ENCODE measurements at regions of chr16 and their contacts with region 1.

Region 1: GRCh38 chr16:56964243-56965148 is 2.7 kb downstream of the CETP start:
- DNase-seq: no peak
- ATAC-seq: peak; percentile 92
- H3K4me3 ChIP-seq: no peak overlapping the region
- H3K27ac ChIP-seq: no peak overlapping the region
- H3K4me1 ChIP-seq: peaks cover 7% of the 10 kb centered on the region
- H3K27me3 ChIP-seq: no peaks in the 10 kb centered on the region
- CTCF ChIP-seq: peak; percentile 100; a peak in 5 of 6 replicates
- EP300 ChIP-seq: no peak
- POLR2A ChIP-seq: no peak
- RAD21 ChIP-seq: peak; percentile 97

Region 2: GRCh38 chr16:56789360-56789759 is 175.1 kb before region 1 on chr16:
- CTCF ChIA-PET with region 1: interaction called, 13 read pairs
- POLR2A ChIA-PET with region 1: no interaction called
- RAD21 ChIA-PET with region 1: interaction called, 5 read pairs
- SMC1A ChIA-PET with region 1: interaction called, 4 read pairs
- in situ Hi-C with region 1: no loop called
- intact Hi-C with region 1: no loop called
- DNase-seq: no peak
- ATAC-seq: peak; percentile 69
- H3K4me3 ChIP-seq: no peak overlapping the region
- H3K27ac ChIP-seq: no peak overlapping the region
- H3K4me1 ChIP-seq: no peaks in the 10 kb centered on the region
- H3K27me3 ChIP-seq: no peaks in the 10 kb centered on the region
- CTCF ChIP-seq: peak; percentile 28 to 51 (median 31); a peak in 3 of 6 replicates
- EP300 ChIP-seq: no peak
- POLR2A ChIP-seq: no peak
- RAD21 ChIP-seq: peak; percentile 53

Region 3: DNA sequence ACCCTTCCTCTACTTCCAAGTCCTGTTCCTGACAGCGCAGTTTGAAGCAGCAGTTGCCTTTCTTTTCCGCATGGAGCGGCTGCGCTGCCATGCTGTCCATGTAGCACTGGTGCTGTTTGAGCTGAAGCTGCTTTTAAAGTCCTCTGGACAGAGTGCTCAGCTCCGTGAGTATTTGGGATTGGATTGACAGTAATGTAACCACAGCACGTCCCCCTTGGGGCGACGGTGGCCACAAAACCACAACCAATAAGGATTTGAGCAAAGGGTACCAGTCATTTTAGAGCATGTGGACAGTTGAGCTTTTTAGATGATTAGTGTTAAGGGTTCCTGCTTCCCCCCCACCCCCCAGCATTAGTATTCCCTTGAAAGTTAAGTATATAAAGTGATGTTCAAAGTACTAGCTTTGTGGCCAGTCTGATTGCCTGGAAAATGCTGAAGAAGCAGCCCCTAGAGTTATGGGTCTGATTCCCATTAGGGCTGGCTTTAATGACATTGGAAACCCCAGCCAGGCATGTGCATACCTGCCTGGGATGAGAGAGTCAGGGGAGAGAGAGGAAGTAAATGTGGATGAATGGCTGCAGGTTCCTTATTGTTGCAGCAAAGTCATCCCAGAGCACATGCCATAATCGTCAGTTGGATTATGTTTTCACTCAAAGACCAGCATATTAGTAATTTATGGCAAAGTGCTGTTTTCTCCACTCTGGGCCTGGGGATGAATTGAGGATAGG is 131.1 kb before region 1 on chr16:
- CTCF ChIA-PET with region 1: no interaction called
- POLR2A ChIA-PET with region 1: no interaction called
- RAD21 ChIA-PET with region 1: no interaction called
- SMC1A ChIA-PET with region 1: no interaction called
- in situ Hi-C with region 1: no loop called
- intact Hi-C with region 1: no loop called
- DNase-seq: no peak
- ATAC-seq: no peak
- H3K4me3 ChIP-seq: no peak overlapping the region
- H3K27ac ChIP-seq: no peak overlapping the region
- H3K4me1 ChIP-seq: no peaks in the 10 kb centered on the region
- H3K27me3 ChIP-seq: no peaks in the 10 kb centered on the region
- CTCF ChIP-seq: no peak
- EP300 ChIP-seq: no peak
- POLR2A ChIP-seq: no peak
- RAD21 ChIP-seq: no peak

Region 4: GRCh38 chr16:56944954-56945839 is 19.3 kb before region 1 on chr16:
- CTCF ChIA-PET with region 1: interaction called, 68 read pairs
- POLR2A ChIA-PET with region 1: interaction called, 4 read pairs
- RAD21 ChIA-PET with region 1: interaction called, 4 read pairs
- SMC1A ChIA-PET with region 1: interaction called, 6 read pairs
- in situ Hi-C with region 1: no loop called
- intact Hi-C with region 1: no loop called
- DNase-seq: peak; percentile 61
- ATAC-seq: peak; percentile 34
- H3K4me3 ChIP-seq: no peak overlapping the region
- H3K27ac ChIP-seq: peak overlapping the region; percentile 40; the same call in 1 of the 2 replicates
- H3K4me1 ChIP-seq: peaks cover 47% of the 10 kb centered on the region
- H3K27me3 ChIP-seq: no peaks in the 10 kb centered on the region
- CTCF ChIP-seq: no peak
- EP300 ChIP-seq: peak in 1 of 2 experiments; percentile 55; a peak in 1 of 4 replicates
- POLR2A ChIP-seq: peak; percentile 76
- RAD21 ChIP-seq: no peak

Region 5: DNA sequence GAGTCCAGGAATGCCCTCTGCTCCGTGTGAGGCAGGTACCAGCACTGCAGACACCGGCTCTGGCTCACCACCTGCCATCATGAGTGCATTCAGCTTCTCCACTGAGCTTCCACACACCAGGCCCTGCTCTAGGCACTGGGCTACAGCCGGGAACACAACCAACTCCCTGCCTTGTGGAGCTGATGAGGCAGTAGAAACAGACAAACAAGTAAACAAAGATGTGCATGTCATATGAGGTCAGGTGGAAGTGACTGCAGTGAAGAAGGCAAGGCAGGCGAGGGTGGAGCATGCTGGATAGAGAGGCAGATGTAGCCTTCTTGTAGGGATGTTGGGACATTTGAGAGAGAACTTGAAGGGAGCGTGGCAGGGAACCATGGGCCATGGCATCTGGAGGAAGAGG is 29.8 kb after region 1 on chr16:
- CTCF ChIA-PET with region 1: interaction called, 420 read pairs
- POLR2A ChIA-PET with region 1: interaction called, 343 read pairs
- RAD21 ChIA-PET with region 1: interaction called, 473 read pairs
- SMC1A ChIA-PET with region 1: interaction called, 604 read pairs
- in situ Hi-C with region 1: no loop called
- intact Hi-C with region 1: loop called (anchors 5 kb)
- DNase-seq: no peak
- ATAC-seq: 0 out of 3 replicates have a peak, but pooled peaks have one; percentile 1
- H3K4me3 ChIP-seq: no peak overlapping the region; the same call in 1 of the 2 replicates
- H3K27ac ChIP-seq: peak overlapping the region; percentile 15
- H3K4me1 ChIP-seq: peaks cover 14% of the 10 kb centered on the region
- H3K27me3 ChIP-seq: no peaks in the 10 kb centered on the region
- CTCF ChIP-seq: no peak
- EP300 ChIP-seq: no peak
- POLR2A ChIP-seq: no peak
- RAD21 ChIP-seq: no peak

Region 6: DNA sequence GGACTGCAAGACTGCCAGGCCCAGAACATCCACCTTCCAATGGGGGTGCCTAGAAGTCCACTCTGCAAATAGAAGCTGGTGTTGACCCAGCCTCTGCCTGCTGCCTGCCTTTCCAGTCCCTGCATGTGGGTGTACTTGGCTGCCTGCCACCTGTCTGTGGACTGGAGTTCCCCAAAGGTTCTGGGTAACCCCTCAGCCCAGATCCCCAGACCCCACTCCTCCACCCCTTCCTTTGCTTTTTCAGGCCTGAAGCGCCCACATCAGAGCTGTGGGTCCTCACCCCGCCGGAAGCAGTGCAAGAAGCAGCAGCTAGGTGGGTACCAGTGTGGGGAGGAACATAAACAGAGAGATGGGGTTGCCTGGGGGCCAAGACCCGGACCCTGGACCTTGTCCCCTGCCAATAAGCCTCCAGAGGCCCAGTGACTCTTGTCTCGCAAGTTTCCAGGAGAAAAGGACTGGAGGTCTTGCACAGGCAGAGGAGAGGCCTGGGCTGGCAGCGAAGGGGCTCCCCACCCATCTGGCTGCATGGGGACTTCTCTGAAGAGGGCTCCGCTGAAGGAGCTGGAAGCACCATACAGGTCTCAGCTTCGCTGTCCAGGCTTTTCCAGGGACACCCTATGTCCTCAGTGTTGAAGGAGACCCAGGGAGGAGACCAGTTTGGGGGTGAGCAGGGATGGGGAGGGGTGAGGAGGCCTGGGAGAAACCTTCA is 59.2 kb after region 1 on chr16:
- CTCF ChIA-PET with region 1: interaction called, 10 read pairs
- POLR2A ChIA-PET with region 1: no interaction called
- RAD21 ChIA-PET with region 1: interaction called, 6 read pairs
- SMC1A ChIA-PET with region 1: interaction called, 9 read pairs
- in situ Hi-C with region 1: no loop called
- intact Hi-C with region 1: no loop called
- DNase-seq: no peak
- ATAC-seq: peak; percentile 58
- H3K4me3 ChIP-seq: no peak overlapping the region
- H3K27ac ChIP-seq: no peak overlapping the region
- H3K4me1 ChIP-seq: no peaks in the 10 kb centered on the region; the same call in 1 of the 2 replicates
- H3K27me3 ChIP-seq: no peaks in the 10 kb centered on the region
- CTCF ChIP-seq: no peak
- EP300 ChIP-seq: no peak
- POLR2A ChIP-seq: no peak
- RAD21 ChIP-seq: no peak

Region 7: DNA sequence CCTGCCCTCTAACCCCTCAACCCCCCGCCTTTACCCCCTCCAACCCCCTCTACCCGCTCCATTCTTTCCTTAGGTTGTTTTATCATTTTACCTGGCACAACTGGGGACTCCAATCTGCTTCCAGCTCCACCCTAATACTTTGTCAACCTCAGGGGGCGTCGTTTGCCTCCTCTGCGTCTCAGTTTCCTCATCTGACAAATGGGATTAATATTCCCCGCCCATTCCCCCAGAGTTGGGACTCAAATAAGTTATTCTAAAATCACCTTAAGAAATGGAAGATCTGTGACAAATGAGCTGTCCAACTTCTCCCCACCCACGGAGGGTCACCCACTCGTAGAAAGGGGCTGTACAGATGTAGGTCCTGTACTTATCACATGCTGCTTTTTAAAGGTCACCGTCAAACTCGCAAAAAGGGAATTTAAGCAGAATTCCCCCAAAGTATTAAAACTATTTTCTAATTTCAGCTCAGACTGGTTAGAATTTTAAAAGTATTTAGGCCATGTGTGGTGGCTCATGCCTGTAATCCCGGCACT is 87.3 kb after region 1 on chr16:
- CTCF ChIA-PET with region 1: interaction called, 212 read pairs
- POLR2A ChIA-PET with region 1: interaction called, 21 read pairs
- RAD21 ChIA-PET with region 1: interaction called, 115 read pairs
- SMC1A ChIA-PET with region 1: interaction called, 111 read pairs
- in situ Hi-C with region 1: no loop called
- intact Hi-C with region 1: no loop called
- DNase-seq: no peak
- ATAC-seq: no peak
- H3K4me3 ChIP-seq: no peak overlapping the region
- H3K27ac ChIP-seq: no peak overlapping the region
- H3K4me1 ChIP-seq: peaks cover 36% of the 10 kb centered on the region
- H3K27me3 ChIP-seq: no peaks in the 10 kb centered on the region
- CTCF ChIP-seq: no peak
- EP300 ChIP-seq: no peak
- POLR2A ChIP-seq: no peak
- RAD21 ChIP-seq: no peak

Region 8: GRCh38 chr16:57091975-57092785 is 127.7 kb after region 1 on chr16 and contains the start of gene CPNE2:
- CTCF ChIA-PET with region 1: interaction called, 40 read pairs
- POLR2A ChIA-PET with region 1: interaction called, 3 read pairs
- RAD21 ChIA-PET with region 1: interaction called, 3 read pairs
- SMC1A ChIA-PET with region 1: interaction called, 3 read pairs
- in situ Hi-C with region 1: no loop called
- intact Hi-C with region 1: no loop called
- DNase-seq: no peak
- ATAC-seq: peak; percentile 68
- H3K4me3 ChIP-seq: peak within 1 kb of the TSS; percentile 66
- H3K27ac ChIP-seq: no peak within 1 kb of the TSS
- H3K4me1 ChIP-seq: no peaks in the 10 kb centered on the region; the same call in none of the 2 replicates
- H3K27me3 ChIP-seq: peaks cover 0 to 11% of the 10 kb centered on the region in 2 experiments; a peak in 3 of 4 replicates
- CTCF ChIP-seq: no peak; a peak in 1 of 6 replicates
- EP300 ChIP-seq: no peak
- POLR2A ChIP-seq: no peak; the same call in 1 of the 2 replicates
- RAD21 ChIP-seq: no peak
- polyA plus RNA-seq, gene CPNE2: 4.8 to 5.6 TPM

Region 9: DNA sequence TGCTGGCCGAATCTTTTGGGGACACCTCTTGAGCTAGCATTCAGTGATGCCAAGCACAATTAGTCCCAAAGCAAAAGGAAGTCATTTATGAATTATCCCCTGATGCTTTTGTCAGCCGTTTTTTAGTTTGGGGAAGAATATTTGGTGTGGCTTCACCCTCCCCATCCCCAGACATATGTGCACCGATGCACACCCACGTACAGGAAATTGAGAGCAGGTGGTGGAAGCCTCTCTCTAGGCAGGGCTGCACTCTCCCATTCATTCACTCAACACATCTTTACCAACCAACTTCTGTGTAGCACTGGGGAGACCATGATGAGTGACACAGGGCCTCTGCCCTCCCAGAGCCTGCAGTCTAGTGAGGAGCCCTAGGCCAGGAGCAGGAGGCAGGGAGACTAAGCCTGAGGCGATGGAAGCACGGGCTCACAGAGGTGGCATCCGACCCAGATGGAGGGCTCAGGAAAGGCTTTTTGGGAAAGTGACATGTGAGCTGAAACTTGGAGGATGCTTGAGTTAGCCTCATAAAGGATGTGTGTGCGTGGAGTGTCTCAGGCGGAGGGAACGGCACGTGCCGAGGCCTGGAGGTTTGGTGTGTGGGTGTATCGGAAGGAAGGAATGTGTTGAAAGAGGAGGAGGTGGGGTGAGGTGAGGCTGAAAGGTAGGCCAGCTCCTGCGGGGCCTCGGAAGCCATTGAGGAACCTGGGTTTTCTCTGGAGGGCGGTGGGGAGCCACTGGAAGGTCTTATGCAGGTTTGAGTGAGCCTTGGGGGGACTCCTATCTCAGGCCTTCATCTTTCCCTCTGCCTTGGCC is 177.5 kb after region 1 on chr16:
- CTCF ChIA-PET with region 1: no interaction called
- POLR2A ChIA-PET with region 1: no interaction called
- RAD21 ChIA-PET with region 1: no interaction called
- SMC1A ChIA-PET with region 1: no interaction called
- in situ Hi-C with region 1: no loop called
- intact Hi-C with region 1: no loop called
- DNase-seq: no peak
- ATAC-seq: peak; percentile 70
- H3K4me3 ChIP-seq: no peak overlapping the region
- H3K27ac ChIP-seq: no peak overlapping the region
- H3K4me1 ChIP-seq: peaks cover 11% of the 10 kb centered on the region
- H3K27me3 ChIP-seq: no peaks in the 10 kb centered on the region
- CTCF ChIP-seq: no peak
- EP300 ChIP-seq: no peak
- POLR2A ChIP-seq: no peak
- RAD21 ChIP-seq: no peak

Measured in GM12878 (cell line).